ENCODE measurements at regions of chr4 and their contacts with region 1.

Region 1: GRCh38 chr4:151099976-151100417 is 569 bp downstream of the RPS3A start:
- DNase-seq: no peak
- H3K4me3 Mint-ChIP-seq: peak overlapping the region; percentile 82
- H3K27ac Mint-ChIP-seq: peak overlapping the region; percentile 99
- H3K4me1 Mint-ChIP-seq: peaks cover 6% of the 10 kb centered on the region
- H3K27me3 Mint-ChIP-seq: no peaks in the 10 kb centered on the region
- CTCF ChIP-seq: no peak

Region 2: DNA sequence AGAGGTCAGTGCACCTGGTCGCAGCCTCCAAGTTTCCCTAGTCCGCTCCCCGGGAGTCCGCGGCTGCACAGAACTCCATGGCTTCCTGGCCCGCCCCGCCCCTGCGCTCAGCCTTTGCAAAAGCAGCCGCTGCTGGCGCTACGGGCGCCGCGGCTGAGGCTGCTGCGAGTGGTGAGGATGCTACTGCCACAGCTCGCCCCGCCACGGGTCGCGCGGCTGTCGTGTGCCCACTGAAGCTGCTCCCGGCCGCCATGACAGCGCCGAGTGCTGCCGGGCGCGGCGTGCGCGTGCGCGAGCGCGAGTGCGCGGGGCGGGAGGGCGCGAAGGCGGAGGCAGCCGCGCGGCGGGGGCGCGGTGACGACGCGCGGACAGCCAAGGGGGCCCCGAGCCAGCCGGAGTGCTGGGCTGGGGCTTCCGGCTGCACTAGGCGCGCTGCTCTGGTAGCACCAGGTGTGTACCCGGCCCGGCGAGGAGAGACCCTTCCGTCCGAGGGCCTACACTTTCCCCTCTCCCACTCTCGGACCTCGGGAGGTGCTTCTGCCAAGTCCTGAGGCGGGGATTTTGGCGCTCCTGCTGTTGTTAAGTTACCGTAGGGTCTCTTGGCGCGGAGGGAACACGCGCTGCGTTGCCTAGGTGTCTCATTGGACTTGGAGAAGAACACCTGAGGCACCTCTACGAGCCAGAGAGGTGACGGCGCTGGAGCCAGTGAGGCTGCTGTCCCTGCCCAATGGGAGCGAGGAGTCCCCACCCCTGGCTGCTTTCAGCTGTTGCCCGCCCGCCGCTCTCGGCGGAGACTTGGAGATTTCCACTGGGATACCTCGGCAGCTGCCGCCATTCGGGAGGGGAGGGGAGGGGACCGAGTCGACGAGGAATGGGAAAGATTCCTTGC is 84.3 kb before region 1 on chr4:
- CTCF ChIA-PET with region 1: no interaction called
- intact Hi-C with region 1: loop called (anchors 2 kb)
- DNase-seq: peak; percentile 79
- H3K4me3 Mint-ChIP-seq: peak overlapping the region; percentile 85
- H3K27ac Mint-ChIP-seq: peak overlapping the region; percentile 82
- H3K4me1 Mint-ChIP-seq: no peaks in the 10 kb centered on the region
- H3K27me3 Mint-ChIP-seq: no peaks in the 10 kb centered on the region
- CTCF ChIP-seq: no peak

Region 3: DNA sequence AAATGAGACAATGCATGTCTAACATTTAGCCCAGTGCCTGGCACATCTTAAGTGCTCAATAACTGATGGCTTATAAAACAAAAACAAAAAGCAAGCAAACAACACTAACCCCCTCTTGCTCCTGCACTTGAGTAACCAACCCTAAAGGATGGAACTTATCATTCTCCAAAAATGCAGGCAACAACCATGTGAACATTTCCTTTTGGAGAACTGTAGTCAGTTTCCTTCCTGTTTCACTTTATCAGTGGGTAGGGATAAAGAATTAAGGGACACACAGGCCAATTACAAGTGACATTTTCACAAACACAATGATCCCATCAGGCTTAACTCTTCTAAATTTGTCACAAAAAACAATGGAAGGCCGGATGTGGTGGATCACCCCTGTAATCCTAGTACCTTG is 29.8 kb after region 1 on chr4:
- CTCF ChIA-PET with region 1: no interaction called
- intact Hi-C with region 1: no loop called
- DNase-seq: no peak
- H3K4me3 Mint-ChIP-seq: no peak overlapping the region
- H3K27ac Mint-ChIP-seq: no peak overlapping the region
- H3K4me1 Mint-ChIP-seq: no peaks in the 10 kb centered on the region
- H3K27me3 Mint-ChIP-seq: no peaks in the 10 kb centered on the region
- CTCF ChIP-seq: no peak

Region 4: DNA sequence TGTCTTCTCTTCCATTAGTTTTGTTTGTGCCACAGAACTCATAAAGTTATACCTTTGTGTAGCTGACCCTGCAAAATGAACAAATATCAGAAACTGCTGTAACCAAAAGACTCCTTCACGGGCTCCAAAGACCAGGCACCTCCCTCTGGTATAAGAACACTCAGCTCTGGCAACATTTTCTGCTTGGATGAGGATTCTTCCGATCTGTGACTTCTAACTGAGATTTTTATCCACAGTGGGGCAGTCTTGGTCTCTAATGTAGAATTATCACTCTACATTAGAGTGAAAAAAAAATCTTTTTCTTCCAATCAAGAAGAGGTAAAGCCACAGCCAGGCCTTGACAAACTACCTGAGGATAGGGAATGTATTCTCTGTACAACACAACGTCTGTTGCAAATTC is 138.5 kb after region 1 on chr4:
- CTCF ChIA-PET with region 1: no interaction called
- intact Hi-C with region 1: no loop called
- DNase-seq: no peak
- H3K4me3 Mint-ChIP-seq: no peak overlapping the region
- H3K27ac Mint-ChIP-seq: no peak overlapping the region
- H3K4me1 Mint-ChIP-seq: no peaks in the 10 kb centered on the region
- H3K27me3 Mint-ChIP-seq: no peaks in the 10 kb centered on the region
- CTCF ChIP-seq: no peak

Measured in Calu3 (cell line).